ENCODE measurements at regions of chr13 and their contacts with region 1.

Region 1: GRCh38 chr13:44435142-44435982 is 61.7 kb downstream of the SERP2 start:
- DNase-seq: peak; percentile 90 to 98
- H3K4me3 ChIP-seq: peak overlapping the region; percentile 83 to 97 (median 90)
- H3K27ac ChIP-seq: peak overlapping the region; percentile 98
- H3K4me1 ChIP-seq: peaks cover 0 to 8% (median 5%) of the 10 kb centered on the region in 4 experiments; a peak in 5 of 7 replicates
- H3K27me3 ChIP-seq: no peaks in the 10 kb centered on the region
- CTCF ChIP-seq: no peak
- EP300 ChIP-seq: peak in 1 of 2 experiments; percentile 88; a peak in 1 of 3 replicates
- POLR2A ChIP-seq: peak; percentile 78 to 93
- RAD21 ChIP-seq: 0 out of 4 replicates have a peak, but pooled peaks of 1 of the 2 experiments have one; percentile 11

Region 2: GRCh38 chr13:44141725-44142539 is 293.4 kb before region 1 on chr13:
- CTCF ChIA-PET with region 1: no interaction called
- POLR2A ChIA-PET with region 1: interaction called, 17 read pairs
- DNase-seq: peak; percentile 78 to 100
- H3K4me3 ChIP-seq: peak overlapping the region; percentile 76 to 91 (median 80)
- H3K27ac ChIP-seq: peak overlapping the region; percentile 91
- H3K4me1 ChIP-seq: peaks cover 0 to 4% (median 3%) of the 10 kb centered on the region in 4 experiments; a peak in 4 of 7 replicates
- H3K27me3 ChIP-seq: no peaks in the 10 kb centered on the region
- CTCF ChIP-seq: no peak
- EP300 ChIP-seq: no peak
- POLR2A ChIP-seq: peak; percentile 79 to 95
- RAD21 ChIP-seq: peak in 1 of 2 experiments; percentile 19; a peak in 1 of 4 replicates

Region 3: GRCh38 chr13:44212633-44213403 is 222.5 kb before region 1 on chr13:
- CTCF ChIA-PET with region 1: no interaction called
- POLR2A ChIA-PET with region 1: interaction called, 17 read pairs
- DNase-seq: no peak
- H3K4me3 ChIP-seq: no peak overlapping the region
- H3K27ac ChIP-seq: no peak overlapping the region
- H3K4me1 ChIP-seq: peaks cover 0 to 4% (median 0%) of the 10 kb centered on the region in 4 experiments; a peak in 1 of 7 replicates
- H3K27me3 ChIP-seq: no peaks in the 10 kb centered on the region
- CTCF ChIP-seq: no peak
- EP300 ChIP-seq: no peak
- POLR2A ChIP-seq: no peak
- RAD21 ChIP-seq: no peak

Region 4: DNA sequence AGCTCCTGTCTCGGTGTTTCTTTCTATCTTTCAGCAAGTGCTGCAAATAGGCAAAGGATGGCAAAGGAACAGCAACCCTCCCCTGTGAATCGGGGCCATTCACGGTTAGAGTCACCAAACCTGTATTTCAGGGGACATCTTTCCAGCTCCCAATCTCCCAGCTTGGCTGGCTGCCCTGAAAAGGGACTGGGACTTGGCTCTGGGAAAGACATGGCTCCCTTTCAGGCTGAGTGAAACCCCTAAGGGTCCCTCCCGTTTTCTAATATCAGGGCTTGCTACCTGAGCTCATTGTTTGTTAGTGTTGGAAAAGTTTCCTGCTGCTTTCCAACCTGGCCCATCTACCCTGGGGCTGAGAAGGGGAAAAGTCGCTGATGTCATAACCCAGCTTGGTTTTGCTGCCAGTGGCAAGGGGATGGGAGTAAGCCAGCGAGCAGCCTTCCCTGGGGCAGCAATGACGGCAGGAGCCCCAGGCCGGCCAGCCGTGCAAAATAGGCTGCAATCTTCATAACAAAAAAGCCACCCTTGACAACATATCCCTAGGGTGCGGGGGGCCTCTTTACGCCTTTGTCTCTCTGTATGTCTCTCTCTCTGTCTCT is 31.8 kb before region 1 on chr13:
- CTCF ChIA-PET with region 1: interaction called, 6 read pairs
- POLR2A ChIA-PET with region 1: interaction called, 125 read pairs
- DNase-seq: no peak
- H3K4me3 ChIP-seq: peak overlapping the region; percentile 2 to 44 (median 11); a peak in 4 of 8 replicates
- H3K27ac ChIP-seq: 0 out of 2 replicates have a peak overlapping the region, but pooled peaks have one; percentile 55
- H3K4me1 ChIP-seq: peaks cover 16 to 53% (median 34%) of the 10 kb centered on the region in 4 experiments
- H3K27me3 ChIP-seq: no peaks in the 10 kb centered on the region
- CTCF ChIP-seq: no peak
- EP300 ChIP-seq: no peak
- POLR2A ChIP-seq: no peak
- RAD21 ChIP-seq: no peak

Region 5: DNA sequence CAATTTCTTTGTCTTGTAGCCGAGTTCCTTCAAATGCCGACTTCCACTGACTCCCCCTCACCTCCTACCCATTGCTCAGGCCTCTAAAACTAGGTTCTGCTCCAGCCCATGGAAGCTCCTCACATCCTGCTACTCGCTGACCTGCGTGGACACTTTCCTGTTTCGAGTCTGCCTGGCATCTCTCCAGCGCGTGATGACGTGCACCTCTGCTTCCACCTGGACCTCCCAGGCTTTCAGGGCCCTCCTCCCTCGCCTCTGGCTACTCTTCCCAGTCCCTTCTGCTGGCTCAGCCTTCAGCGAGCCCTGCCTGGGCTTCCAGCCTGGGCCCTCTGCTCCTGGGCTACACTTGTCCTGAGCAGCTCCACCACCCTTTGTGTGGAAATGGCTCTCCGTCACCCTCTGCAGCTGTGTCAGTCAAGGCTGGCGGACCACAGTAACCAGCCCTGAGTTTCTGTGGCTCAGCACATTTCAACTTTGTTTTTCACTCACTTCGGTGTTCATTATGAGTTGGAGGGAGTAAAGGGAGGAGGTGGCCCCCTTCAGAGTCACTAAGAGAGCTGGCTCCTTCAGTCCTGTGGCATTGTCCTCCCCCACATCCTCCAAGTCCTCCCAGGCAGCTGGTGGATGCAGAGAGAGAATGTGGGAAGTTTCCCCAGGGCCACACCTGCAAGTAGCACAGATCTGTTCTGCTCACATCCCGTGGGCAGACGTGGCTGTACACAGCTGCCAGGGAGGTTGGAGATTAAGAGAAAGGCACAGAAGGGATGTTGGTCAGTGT is 12.4 kb before region 1 on chr13:
- CTCF ChIA-PET with region 1: interaction called, 12 read pairs
- POLR2A ChIA-PET with region 1: interaction called, 80 read pairs
- DNase-seq: peak in 1 of 2 experiments; percentile 36
- H3K4me3 ChIP-seq: no peak overlapping the region
- H3K27ac ChIP-seq: no peak overlapping the region
- H3K4me1 ChIP-seq: peaks cover 0 to 5% (median 4%) of the 10 kb centered on the region in 4 experiments; a peak in 5 of 7 replicates
- H3K27me3 ChIP-seq: no peaks in the 10 kb centered on the region
- CTCF ChIP-seq: no peak
- EP300 ChIP-seq: no peak
- POLR2A ChIP-seq: no peak
- RAD21 ChIP-seq: no peak

Region 6: GRCh38 chr13:44629465-44630183 is 194.3 kb after region 1 on chr13:
- CTCF ChIA-PET with region 1: no interaction called
- POLR2A ChIA-PET with region 1: no interaction called
- DNase-seq: no peak
- H3K4me3 ChIP-seq: no peak overlapping the region
- H3K27ac ChIP-seq: no peak overlapping the region
- H3K4me1 ChIP-seq: no peaks in the 10 kb centered on the region
- H3K27me3 ChIP-seq: no peaks in the 10 kb centered on the region
- CTCF ChIP-seq: no peak
- EP300 ChIP-seq: no peak
- POLR2A ChIP-seq: no peak
- RAD21 ChIP-seq: no peak